ENCODE measurements at regions of chr16 and their contacts with region 1.

Region 1: DNA sequence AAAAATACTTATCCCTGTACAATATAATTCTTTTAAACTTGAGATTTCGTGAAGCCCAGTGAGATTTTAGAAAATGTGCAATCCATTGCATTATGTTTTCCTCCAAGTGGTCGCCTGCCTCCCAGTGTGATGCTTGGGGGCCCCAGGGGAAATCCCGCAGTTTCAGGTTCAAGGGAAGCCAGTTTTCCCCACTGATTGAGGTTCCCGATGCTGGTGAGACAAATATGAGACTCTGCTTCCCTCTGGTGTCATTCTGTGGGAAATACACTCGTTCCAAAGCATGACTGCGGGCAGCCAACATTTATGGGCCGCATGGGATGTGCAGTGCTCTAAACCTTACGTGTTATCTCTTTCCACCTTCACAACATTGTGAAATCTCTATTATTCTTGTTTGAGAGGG is 200.8 kb downstream of the PRKCB start:
- DNase-seq: peak in 4 of 5 donors; percentile 28 to 52 (median 34)
- H3K4me3 ChIP-seq: no peak overlapping the region
- H3K4me3 Mint-ChIP-seq: peak overlapping the region in 4 of 8 donors; percentile 9 to 91 (median 47)
- H3K27ac ChIP-seq: no peak overlapping the region
- H3K27ac Mint-ChIP-seq: peak overlapping the region in 5 of 7 donors; percentile 4 to 86 (median 59)
- H3K4me1 ChIP-seq: peaks cover 42% of the 10 kb centered on the region
- H3K4me1 Mint-ChIP-seq: peaks cover 32 to 59% (median 49%) of the 10 kb centered on the region in 4 donors
- H3K27me3 ChIP-seq: no peaks in the 10 kb centered on the region
- H3K27me3 Mint-ChIP-seq: no peaks in the 10 kb centered on the region

Region 2: DNA sequence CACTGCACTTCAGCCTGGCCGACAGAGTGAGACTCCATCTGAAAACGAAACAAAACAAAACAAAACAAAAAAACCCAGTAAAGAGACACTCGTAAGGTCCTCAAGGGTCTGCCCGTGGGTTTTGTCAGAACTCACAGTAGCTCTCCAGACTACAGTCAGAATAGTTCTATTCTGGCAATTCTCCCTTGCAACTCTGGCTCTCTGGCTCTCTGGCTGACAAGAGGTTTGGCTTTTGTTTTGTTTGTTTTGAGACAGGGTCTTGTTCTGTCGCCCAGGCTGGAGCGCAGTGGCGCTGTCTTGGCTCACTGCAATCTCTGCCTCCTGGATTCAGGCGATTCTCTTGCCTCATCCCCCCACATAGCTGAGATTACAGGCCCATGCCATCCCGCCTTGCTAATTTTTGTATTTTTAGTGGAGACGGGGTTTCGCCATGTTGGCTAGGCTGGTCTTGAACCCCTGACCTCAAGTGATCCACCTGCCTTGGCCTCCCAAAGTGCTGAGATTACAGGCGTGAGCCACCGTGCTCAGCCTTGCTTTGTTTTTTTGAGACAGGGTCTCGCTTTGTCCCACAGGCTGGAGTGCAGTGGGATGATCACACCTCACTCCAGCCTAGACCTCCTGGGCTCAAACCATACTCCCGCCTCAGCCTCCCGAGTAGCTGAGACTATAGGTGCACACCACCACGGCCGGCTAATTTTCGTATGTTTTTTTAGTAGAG is 302.3 kb before region 1 on chr16:
- CTCF ChIA-PET with region 1: interaction called, 3 read pairs
- POLR2A ChIA-PET with region 1: no interaction called
- intact Hi-C with region 1: loop called (anchors 1 kb)
- DNase-seq: no peak
- H3K4me3 ChIP-seq: no peak overlapping the region
- H3K4me3 Mint-ChIP-seq: no peak overlapping the region
- H3K27ac ChIP-seq: no peak overlapping the region
- H3K27ac Mint-ChIP-seq: no peak overlapping the region
- H3K4me1 ChIP-seq: no peaks in the 10 kb centered on the region
- H3K4me1 Mint-ChIP-seq: peaks cover 3 to 6% (median 5%) of the 10 kb centered on the region in 4 donors
- H3K27me3 ChIP-seq: no peaks in the 10 kb centered on the region
- H3K27me3 Mint-ChIP-seq: peaks cover 4 to 10% of the 10 kb centered on the region in 2 donors

Region 3: GRCh38 chr16:23796941-23797340 is 239.7 kb before region 1 on chr16:
- CTCF ChIA-PET with region 1: interaction called, 176 read pairs
- POLR2A ChIA-PET with region 1: no interaction called
- intact Hi-C with region 1: no loop called
- DNase-seq: no peak
- H3K4me3 ChIP-seq: no peak overlapping the region
- H3K4me3 Mint-ChIP-seq: no peak overlapping the region
- H3K27ac ChIP-seq: no peak overlapping the region
- H3K27ac Mint-ChIP-seq: no peak overlapping the region
- H3K4me1 ChIP-seq: no peaks in the 10 kb centered on the region
- H3K4me1 Mint-ChIP-seq: peaks cover 0 to 3% (median 0%) of the 10 kb centered on the region in 4 donors
- H3K27me3 ChIP-seq: no peaks in the 10 kb centered on the region
- H3K27me3 Mint-ChIP-seq: no peaks in the 10 kb centered on the region